CD14-positive monocyte (primary cell): ENCODE measurements at regions of chr6 and their contacts with region 1.

Region 1: DNA sequence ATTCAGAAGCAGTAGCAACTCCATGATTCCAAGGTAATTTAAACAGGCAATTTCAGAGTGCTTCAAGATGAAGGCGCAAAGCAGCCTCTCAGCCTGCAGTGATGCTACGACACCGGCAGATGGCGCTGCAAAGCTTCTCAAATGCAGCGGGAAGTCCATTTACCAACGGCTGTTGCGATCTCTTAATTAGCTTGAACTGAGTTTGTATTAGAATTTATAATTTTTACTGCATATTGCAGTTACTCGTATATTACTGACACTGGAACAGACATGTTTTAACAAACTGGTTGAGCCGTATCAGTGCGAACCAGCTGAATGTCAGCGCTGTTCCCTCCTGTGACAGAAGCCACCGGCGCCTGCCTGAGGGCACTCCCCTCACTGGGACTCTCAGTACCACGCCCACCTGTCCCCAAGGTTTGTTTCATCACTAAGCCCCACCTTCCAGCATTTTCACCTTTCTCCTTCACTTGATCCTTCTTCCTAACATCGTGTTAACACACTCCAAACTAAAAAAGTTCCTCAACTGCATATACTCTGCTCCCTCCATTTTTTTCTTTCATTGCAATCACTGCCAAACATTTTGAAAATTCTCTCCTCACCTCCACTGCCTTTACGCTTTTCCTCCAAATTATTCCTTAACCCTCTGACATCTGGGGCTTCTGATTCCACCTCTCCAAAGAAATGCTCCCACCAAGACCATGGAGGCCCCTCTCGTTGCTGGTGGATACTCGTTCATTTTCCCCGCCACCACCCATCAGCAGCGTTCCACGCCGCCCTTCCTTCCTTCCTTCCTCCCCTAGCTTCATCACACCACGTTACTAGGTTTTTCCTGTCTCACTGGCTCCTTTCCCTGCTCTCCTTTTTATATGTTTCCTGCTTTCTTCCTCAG is 14.5 kb downstream of the GNL1 start:
- DNase-seq: peak; percentile 77 to 86 (median 83)
- H3K4me3 ChIP-seq: peak overlapping the region; percentile 10 to 69 (median 50)
- H3K4me3 Mint-ChIP-seq: peak overlapping the region; percentile 68 to 91
- H3K27ac ChIP-seq: no peak overlapping the region
- H3K27ac Mint-ChIP-seq: peak overlapping the region in 6 of 7 donors; percentile 23 to 68 (median 54)
- H3K4me1 ChIP-seq: peaks cover 13 to 18% of the 10 kb centered on the region in 2 donors
- H3K4me1 Mint-ChIP-seq: peaks cover 22% of the 10 kb centered on the region
- H3K27me3 ChIP-seq: peaks cover 13 to 14% of the 10 kb centered on the region in 2 donors
- H3K27me3 Mint-ChIP-seq: peaks cover 15 to 26% (median 22%) of the 10 kb centered on the region in 3 donors
- CTCF ChIP-seq: peak; percentile 98

Region 2: GRCh38 chr6:30590994-30591393 is 49.2 kb after region 1 on chr6:
- intact Hi-C with region 1: loop called (anchors 5 to 10 kb)
- DNase-seq: no peak
- H3K4me3 ChIP-seq: no peak overlapping the region
- H3K4me3 Mint-ChIP-seq: no peak overlapping the region
- H3K27ac ChIP-seq: peak overlapping the region in 1 of 2 donors; percentile 45
- H3K27ac Mint-ChIP-seq: peak overlapping the region in 2 of 7 donors; percentile 38 to 46
- H3K4me1 ChIP-seq: no peaks in the 10 kb centered on the region
- H3K4me1 Mint-ChIP-seq: no peaks in the 10 kb centered on the region
- H3K27me3 ChIP-seq: no peaks in the 10 kb centered on the region
- H3K27me3 Mint-ChIP-seq: peaks cover 0 to 2% (median 2%) of the 10 kb centered on the region in 3 donors
- CTCF ChIP-seq: no peak

Region 3: DNA sequence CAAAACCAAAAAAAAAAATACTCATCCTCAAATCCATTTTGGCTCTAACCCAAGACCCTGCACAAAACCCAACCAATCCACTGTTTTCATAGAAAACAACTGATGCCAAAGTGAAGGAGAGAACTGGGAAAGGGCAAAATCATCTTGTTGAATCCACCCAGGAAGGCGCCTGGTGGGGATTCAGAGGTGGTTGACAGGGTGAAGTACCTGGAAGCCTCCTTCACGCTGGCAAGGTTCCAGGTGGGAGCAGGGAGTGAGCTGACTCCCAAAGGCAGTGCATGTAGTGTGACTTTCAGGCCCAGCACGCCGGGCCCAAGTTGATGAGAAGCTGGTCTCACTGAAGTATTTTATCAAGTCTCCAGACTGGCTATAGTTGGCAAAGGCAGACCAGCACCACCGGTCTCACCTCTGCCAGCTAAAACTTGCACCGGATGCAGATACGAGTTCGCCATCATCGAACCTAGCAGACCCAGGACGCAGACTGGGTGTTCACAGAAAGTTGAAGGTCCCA is 58.7 kb after region 1 on chr6:
- intact Hi-C with region 1: loop called (anchors 5 to 10 kb)
- DNase-seq: no peak
- H3K4me3 ChIP-seq: no peak overlapping the region
- H3K4me3 Mint-ChIP-seq: no peak overlapping the region
- H3K27ac ChIP-seq: no peak overlapping the region
- H3K27ac Mint-ChIP-seq: peak overlapping the region in 2 of 7 donors; percentile 1 to 80
- H3K4me1 ChIP-seq: no peaks in the 10 kb centered on the region
- H3K4me1 Mint-ChIP-seq: peaks cover 4% of the 10 kb centered on the region
- H3K27me3 ChIP-seq: no peaks in the 10 kb centered on the region
- H3K27me3 Mint-ChIP-seq: no peaks in the 10 kb centered on the region
- CTCF ChIP-seq: no peak

Region 4: GRCh38 chr6:30730601-30731435 is 189.1 kb after region 1 on chr6:
- intact Hi-C with region 1: loop called in 1 of 2 experiments (anchors 2 kb)
- DNase-seq: peak in 2 of 3 donors; percentile 68 to 72
- H3K4me3 ChIP-seq: peak overlapping the region; percentile 8 to 68 (median 37)
- H3K4me3 Mint-ChIP-seq: peak overlapping the region; percentile 73 to 83
- H3K27ac ChIP-seq: peak overlapping the region in 1 of 2 donors; percentile 42
- H3K27ac Mint-ChIP-seq: peak overlapping the region in 4 of 7 donors; percentile 37 to 83 (median 64)
- H3K4me1 ChIP-seq: peaks cover 21 to 24% of the 10 kb centered on the region in 2 donors
- H3K4me1 Mint-ChIP-seq: peaks cover 20% of the 10 kb centered on the region
- H3K27me3 ChIP-seq: no peaks in the 10 kb centered on the region
- H3K27me3 Mint-ChIP-seq: peaks cover 0 to 2% (median 0%) of the 10 kb centered on the region in 3 donors
- CTCF ChIP-seq: peak; percentile 60